ENCODE measurements at regions of chr13 and their contacts with region 1.

Region 1: DNA sequence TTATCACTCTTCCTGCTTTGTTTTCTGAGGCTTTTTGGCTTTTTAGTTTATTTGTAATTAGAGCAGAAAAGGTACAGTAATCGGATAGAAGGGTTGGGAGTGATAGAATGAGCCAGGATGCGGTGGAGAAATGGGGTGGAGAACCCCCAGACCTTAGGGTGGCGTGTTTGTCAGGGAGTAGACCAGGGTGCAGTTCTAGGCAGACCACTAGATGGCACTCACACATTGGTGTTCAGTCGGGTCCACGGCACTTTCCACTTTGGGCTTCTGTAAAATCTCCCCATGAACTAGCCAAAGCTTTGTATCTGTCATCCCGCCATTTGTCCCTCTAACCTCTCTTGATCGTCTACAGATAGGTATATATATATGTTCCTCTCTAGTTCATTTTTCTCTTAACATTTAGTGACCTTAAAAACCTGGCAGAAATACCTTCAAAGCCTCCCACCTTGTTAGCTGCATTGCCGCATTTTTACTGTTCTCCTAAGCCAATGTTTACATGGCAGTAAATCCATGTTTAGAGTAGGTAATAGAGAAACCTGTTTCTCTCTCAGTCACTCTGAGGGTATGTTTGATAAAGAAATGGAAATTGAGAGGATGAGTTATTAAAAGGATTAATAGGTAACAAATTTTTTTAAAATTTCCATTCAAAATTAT is 154.9 kb downstream of the TM9SF2 start:
- DNase-seq: peak; percentile 86
- H3K4me3 ChIP-seq: peak overlapping the region in 1 of 4 donors; percentile 17
- H3K27ac ChIP-seq: no peak overlapping the region
- H3K4me1 ChIP-seq: peaks cover 7 to 38% (median 14%) of the 10 kb centered on the region in 4 donors
- H3K27me3 ChIP-seq: no peaks in the 10 kb centered on the region
- CTCF ChIP-seq: peak; percentile 90 to 94 (median 91)
- EP300 ChIP-seq: no peak
- POLR2A ChIP-seq: no peak

Region 2: DNA sequence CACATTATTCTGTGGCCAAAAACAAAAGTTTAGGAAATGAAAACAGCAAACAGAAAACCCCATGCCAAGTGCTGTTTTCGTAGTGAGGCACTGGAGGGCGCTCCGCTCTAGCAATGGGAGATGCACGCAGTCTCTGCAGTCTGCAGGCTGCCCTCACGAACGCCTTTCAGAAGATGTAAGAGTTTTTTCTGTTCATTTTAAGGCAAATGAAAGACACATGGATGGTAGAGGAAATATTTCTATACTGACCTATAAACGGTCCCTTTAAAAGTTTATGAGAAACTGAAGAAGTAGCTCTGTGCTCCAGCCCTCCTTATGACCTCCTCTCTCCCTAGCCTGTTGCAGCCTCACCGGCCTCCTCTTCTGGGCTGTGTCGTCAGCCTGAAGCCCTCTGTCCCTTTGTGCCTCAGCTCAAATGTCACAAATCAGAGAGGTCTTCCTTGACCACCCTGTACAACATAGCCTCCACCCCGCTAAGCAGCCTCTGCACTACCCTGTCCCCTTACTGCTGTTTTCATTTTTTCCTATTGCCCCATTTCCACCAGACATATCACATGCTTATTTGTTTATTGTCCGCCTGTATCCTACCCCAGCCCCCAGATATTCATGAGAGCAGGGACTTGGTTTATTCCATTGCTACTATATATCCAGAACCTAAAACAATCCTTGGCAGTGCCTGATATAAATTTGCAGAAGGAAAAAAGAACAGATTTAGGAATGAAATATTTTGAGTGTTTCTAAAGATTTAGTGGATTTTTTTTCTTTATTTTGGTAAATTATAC is 38.6 kb before region 1 on chr13:
- in situ Hi-C with region 1: no loop called
- intact Hi-C with region 1: no loop called
- DNase-seq: peak; percentile 21
- H3K4me3 ChIP-seq: no peak overlapping the region
- H3K27ac ChIP-seq: no peak overlapping the region
- H3K4me1 ChIP-seq: peaks cover 0 to 22% (median 10%) of the 10 kb centered on the region in 4 donors
- H3K27me3 ChIP-seq: no peaks in the 10 kb centered on the region
- CTCF ChIP-seq: peak; percentile 25 to 41 (median 34)
- EP300 ChIP-seq: no peak
- POLR2A ChIP-seq: no peak

Region 3: GRCh38 chr13:99916366-99917103 is 260.3 kb after region 1 on chr13:
- in situ Hi-C with region 1: loop called in 2 of 4 experiments (anchors 10 to 25 kb)
- intact Hi-C with region 1: no loop called
- DNase-seq: no peak
- H3K4me3 ChIP-seq: no peak overlapping the region
- H3K27ac ChIP-seq: no peak overlapping the region
- H3K4me1 ChIP-seq: no peaks in the 10 kb centered on the region
- H3K27me3 ChIP-seq: peaks cover 10% of the 10 kb centered on the region
- CTCF ChIP-seq: peak; percentile 65 to 96 (median 84)
- EP300 ChIP-seq: no peak
- POLR2A ChIP-seq: no peak

Region 4: GRCh38 chr13:100235311-100235901 is 579.2 kb after region 1 on chr13:
- in situ Hi-C with region 1: loop called in 3 of 4 experiments (anchors 10 kb)
- intact Hi-C with region 1: no loop called
- DNase-seq: no peak
- H3K4me3 ChIP-seq: no peak overlapping the region
- H3K27ac ChIP-seq: no peak overlapping the region
- H3K4me1 ChIP-seq: peaks cover 0 to 31% (median 24%) of the 10 kb centered on the region in 4 donors
- H3K27me3 ChIP-seq: no peaks in the 10 kb centered on the region
- CTCF ChIP-seq: peak; percentile 42 to 72 (median 56)
- EP300 ChIP-seq: no peak
- POLR2A ChIP-seq: no peak

Region 5: GRCh38 chr13:100506154-100506553 is 849.9 kb after region 1 on chr13:
- in situ Hi-C with region 1: loop called (anchors 10 to 25 kb)
- intact Hi-C with region 1: loop called (anchors 5 kb)
- DNase-seq: no peak
- H3K4me3 ChIP-seq: no peak overlapping the region
- H3K27ac ChIP-seq: no peak overlapping the region
- H3K4me1 ChIP-seq: no peaks in the 10 kb centered on the region
- H3K27me3 ChIP-seq: no peaks in the 10 kb centered on the region
- CTCF ChIP-seq: no peak
- EP300 ChIP-seq: no peak
- POLR2A ChIP-seq: no peak

Region 6: DNA sequence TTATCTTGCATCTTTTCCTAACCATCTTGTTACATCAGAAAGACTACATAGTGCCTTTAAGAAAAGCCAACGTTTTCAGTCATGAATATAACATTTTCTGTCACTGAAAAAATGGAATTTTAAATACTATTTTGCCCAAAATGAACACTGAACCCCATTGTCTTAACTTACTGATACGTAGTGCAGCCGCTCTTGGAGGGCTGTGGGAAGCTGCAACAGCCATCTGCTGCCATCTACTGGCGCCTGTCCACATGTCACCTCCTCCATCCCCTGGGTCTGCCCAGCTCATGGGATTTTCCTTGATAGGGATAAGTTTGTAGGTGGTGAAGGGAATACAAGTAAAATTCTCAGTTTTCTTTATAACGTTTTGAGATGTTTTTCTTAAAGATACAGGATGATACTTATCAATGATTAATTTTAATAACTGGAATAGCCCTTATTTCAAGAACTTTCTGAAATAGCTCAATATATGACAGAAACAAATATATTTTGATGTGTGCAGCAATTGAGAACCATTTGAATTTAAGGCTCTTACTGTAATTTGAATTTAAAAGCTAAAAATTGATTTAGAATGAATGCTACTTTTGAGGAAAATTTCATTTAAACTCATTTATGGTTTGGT is 858.7 kb after region 1 on chr13:
- in situ Hi-C with region 1: loop called in 3 of 4 experiments (anchors 10 to 25 kb)
- intact Hi-C with region 1: loop called (anchors 5 kb)
- DNase-seq: peak; percentile 80
- H3K4me3 ChIP-seq: no peak overlapping the region
- H3K27ac ChIP-seq: no peak overlapping the region
- H3K4me1 ChIP-seq: peaks cover 0 to 24% (median 5%) of the 10 kb centered on the region in 4 donors
- H3K27me3 ChIP-seq: no peaks in the 10 kb centered on the region
- CTCF ChIP-seq: peak; percentile 84 to 92 (median 88)
- EP300 ChIP-seq: no peak
- POLR2A ChIP-seq: no peak

Measured in transverse colon (tissue), 4 donors.